HCT116 (cell line): ENCODE measurements at regions of chr19 and their contacts with region 1.

Region 1: DNA sequence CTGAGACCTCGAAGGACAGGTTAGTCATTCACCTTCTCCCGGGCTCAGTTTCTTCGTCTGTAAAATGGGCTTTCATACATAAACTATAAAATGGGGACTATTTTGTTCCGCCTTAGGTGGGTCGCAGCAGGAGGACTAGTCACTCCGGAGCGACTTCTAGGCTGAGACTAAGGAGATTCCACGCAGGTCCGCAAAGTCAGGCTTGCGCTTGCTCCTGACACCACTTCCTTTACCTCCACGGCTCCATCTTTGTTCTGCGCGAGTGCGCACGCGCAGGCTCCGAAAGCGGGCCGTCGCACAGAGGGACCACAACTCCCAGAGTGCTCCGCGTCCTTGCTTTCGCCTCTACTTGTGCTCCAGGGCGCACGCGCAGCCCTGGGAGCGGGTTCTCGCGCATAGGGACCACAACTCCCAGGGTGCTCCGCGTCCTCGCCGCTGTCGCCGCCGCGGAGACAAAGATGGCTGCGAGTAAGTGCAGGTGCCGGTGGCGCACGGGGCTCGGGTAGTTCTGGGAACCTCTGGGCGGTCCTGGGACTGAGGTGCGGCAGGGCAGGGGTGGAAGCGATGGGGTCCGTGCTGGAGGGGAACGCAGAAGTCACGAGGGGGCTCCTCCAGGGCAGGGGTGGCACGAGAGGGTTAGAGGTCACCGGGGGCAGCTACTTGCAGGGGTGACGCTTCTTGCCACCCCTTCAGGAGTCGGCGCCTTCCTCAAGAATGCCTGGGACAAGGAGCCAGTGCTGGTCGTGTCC is at the start of gene NDUFA3:
- DNase-seq: peak; percentile 95
- ATAC-seq: peak; percentile 99
- H3K4me3 ChIP-seq: peak within 1 kb of the TSS; percentile 97 to 98
- H3K27ac ChIP-seq: peak within 1 kb of the TSS; percentile 73
- H3K4me1 ChIP-seq: peaks cover 0 to 5% of the 10 kb centered on the region in 2 experiments; a peak in 1 of 4 replicates
- H3K27me3 ChIP-seq: no peaks in the 10 kb centered on the region
- CTCF ChIP-seq: no peak
- POLR2A ChIP-seq: peak; percentile 13
- RAD21 ChIP-seq: no peak
- total RNA-seq, gene NDUFA3: 149 TPM

Region 2: GRCh38 chr19:54115109-54116063 is 12.8 kb after region 1 on chr19 and contains the starts of genes PRPF31 and TFPT:
- CTCF ChIA-PET with region 1: no interaction called
- POLR2A ChIA-PET with region 1: interaction called, 9 read pairs
- RAD21 ChIA-PET with region 1: no interaction called
- intact Hi-C with region 1: loop called (anchors 1 kb)
- DNase-seq: peak; percentile 97
- ATAC-seq: peak; percentile 93
- H3K4me3 ChIP-seq: peak within 1 kb of the TSS; percentile 89 to 91
- H3K27ac ChIP-seq: peak within 1 kb of the TSS; percentile 60
- H3K4me1 ChIP-seq: peaks cover 8 to 19% of the 10 kb centered on the region in 2 experiments; a peak in 3 of 4 replicates
- H3K27me3 ChIP-seq: no peaks in the 10 kb centered on the region
- CTCF ChIP-seq: no peak
- POLR2A ChIP-seq: peak; percentile 28
- RAD21 ChIP-seq: no peak
- total RNA-seq, gene PRPF31: 99.0 TPM
- total RNA-seq, gene TFPT: 7.1 TPM